ENCODE measurements at regions of chr15 and their contacts with region 1.

Region 1: GRCh38 chr15:89139400-89140166 is 51.3 kb downstream of the ABHD2 start:
- DNase-seq: no peak

Region 2: DNA sequence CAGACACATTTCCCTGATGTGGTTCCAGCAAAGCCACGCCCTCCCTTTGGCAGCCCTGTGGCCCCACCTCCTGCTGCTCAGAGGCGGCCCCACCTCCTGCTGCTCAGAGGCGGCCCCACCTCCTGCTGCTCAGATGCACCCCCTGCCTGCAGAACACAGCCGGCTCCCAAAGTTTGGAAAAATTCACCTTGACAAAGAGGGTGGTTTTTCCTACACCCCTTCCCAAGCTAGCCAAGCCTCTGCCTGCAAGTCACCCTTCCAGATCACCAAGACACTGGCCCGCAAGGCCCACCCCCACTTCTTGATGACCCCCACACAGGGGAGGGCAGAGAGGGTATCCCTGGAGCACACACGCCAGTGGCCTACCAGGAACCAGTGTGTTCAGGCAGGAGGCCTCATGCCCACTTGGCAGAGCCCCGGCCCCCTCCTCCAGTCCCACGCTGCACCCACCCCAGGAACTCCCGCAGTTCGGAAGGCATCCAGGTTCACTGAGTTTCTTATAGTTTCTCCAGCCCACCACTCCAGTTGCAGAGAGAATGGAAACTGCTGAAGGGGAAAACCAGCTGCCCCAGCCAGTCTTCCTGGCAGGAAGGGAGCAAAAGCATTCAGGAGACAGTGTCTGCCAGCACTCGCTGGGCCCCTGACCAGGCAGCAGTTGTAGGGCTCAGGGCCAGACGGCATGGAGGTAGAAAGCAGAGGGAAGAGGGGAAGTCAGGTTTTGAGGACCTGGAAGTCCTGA is 242.0 kb before region 1 on chr15:
- intact Hi-C with region 1: loop called (anchors 5 kb)
- DNase-seq: peak; percentile 94

Region 3: GRCh38 chr15:88989578-88989977 is 150.0 kb before region 1 on chr15:
- intact Hi-C with region 1: no loop called
- DNase-seq: no peak

Region 4: DNA sequence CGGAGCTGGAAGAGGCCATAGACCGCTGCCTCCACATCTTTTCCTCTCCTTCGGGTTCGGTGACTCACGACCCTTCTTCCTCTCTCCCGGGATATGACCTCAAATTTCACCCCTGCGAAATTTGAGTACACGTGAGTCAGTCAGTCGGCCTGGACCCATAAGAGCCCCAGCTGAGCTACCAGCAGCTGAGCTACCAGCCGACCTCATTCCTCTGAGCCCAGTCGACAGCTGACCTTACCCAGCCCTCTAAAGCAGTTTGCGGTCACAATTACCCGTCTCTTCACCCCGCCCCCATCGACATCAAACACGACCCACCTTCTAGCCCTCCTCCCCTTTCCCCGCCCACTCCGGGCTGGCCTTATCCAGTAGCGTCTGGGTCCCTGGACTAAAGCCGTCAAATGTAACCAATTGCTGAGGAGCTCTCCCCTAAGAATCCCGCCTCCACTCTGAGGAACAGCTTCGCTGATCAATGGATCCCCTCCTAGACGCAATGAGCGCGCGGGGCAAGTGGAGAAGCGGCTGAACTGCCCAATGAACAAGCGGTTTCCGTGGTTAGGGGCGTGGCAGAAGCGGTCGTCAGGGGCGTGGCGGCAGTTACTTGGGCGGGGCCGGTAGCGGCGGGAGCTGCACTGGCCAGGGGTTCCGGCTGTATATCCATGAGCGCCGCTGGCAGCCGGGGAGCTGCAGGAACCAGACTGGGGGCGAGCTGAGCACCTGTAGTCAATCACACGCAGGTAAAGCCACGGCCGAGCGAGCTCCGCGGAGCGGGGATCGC is 51.6 kb before region 1 on chr15 and contains the start of gene ABHD2:
- intact Hi-C with region 1: loop called (anchors 5 kb)
- DNase-seq: peak; percentile 100
- total RNA-seq, gene ABHD2: 185 TPM

Region 5: GRCh38 chr15:89177633-89178306 is 38.2 kb after region 1 on chr15:
- intact Hi-C with region 1: loop called (anchors 5 kb)
- DNase-seq: no peak

Measured in cardiac septum (tissue), 1 donor.